HEK293T (cell line): ENCODE measurements at regions of chr6 and their contacts with region 1.

Region 1: DNA sequence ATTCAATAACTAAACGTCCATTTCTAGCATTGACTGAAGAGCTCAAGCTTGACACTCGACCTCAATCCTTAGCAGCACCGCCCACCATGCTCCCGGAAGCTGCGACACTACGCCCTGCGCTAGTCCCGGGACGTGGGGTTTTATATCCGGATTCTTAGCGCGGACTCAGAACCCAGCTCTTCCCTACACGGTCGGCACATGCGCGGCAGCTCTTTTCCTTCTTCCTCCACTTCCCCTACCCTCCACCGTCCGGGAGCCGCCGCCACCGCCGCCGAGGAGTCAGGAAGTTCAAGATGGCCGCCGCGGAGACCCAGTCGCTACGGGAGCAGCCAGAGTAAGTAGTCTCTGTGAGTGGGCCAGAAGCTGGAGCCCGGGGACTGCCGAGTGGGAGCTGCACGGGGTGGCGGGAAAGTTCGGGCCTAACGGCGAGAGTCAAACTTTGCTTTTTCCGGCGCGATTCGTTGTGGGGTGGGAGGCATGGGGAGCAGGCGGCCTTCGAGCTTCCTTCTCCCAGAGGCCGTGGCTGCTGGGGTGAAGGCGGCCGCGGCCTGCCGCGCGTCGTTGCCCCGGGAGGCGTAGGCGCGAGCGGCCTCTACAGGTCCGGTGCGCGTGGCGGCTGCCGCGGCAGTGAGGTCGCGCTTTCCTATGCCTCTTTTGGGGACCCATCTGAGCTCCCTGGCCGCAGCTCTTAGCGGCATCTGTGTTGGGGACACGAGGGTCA is 57.6 kb downstream of the FAM217A start:
- DNase-seq: peak; percentile 85

Region 2: GRCh38 chr6:3748208-3749066 is 272.9 kb before region 1 on chr6:
- CTCF ChIA-PET with region 1: no interaction called
- POLR2A ChIA-PET with region 1: interaction called, 14 read pairs
- DNase-seq: peak; percentile 68

Region 3: GRCh38 chr6:3794092-3794491 is 227.2 kb before region 1 on chr6:
- CTCF ChIA-PET with region 1: no interaction called
- POLR2A ChIA-PET with region 1: no interaction called
- DNase-seq: no peak

Region 4: GRCh38 chr6:3997177-3997770 is 24.0 kb before region 1 on chr6:
- CTCF ChIA-PET with region 1: no interaction called
- POLR2A ChIA-PET with region 1: interaction called, 10 read pairs
- DNase-seq: no peak

Region 5: GRCh38 chr6:4008324-4009047 is 12.8 kb before region 1 on chr6:
- CTCF ChIA-PET with region 1: interaction called, 6 read pairs
- POLR2A ChIA-PET with region 1: interaction called, 17 read pairs
- DNase-seq: peak; percentile 45

Region 6: GRCh38 chr6:4055420-4056041 is 34.2 kb after region 1 on chr6:
- CTCF ChIA-PET with region 1: no interaction called
- POLR2A ChIA-PET with region 1: interaction called, 10 read pairs
- DNase-seq: peak; percentile 22

Region 7: DNA sequence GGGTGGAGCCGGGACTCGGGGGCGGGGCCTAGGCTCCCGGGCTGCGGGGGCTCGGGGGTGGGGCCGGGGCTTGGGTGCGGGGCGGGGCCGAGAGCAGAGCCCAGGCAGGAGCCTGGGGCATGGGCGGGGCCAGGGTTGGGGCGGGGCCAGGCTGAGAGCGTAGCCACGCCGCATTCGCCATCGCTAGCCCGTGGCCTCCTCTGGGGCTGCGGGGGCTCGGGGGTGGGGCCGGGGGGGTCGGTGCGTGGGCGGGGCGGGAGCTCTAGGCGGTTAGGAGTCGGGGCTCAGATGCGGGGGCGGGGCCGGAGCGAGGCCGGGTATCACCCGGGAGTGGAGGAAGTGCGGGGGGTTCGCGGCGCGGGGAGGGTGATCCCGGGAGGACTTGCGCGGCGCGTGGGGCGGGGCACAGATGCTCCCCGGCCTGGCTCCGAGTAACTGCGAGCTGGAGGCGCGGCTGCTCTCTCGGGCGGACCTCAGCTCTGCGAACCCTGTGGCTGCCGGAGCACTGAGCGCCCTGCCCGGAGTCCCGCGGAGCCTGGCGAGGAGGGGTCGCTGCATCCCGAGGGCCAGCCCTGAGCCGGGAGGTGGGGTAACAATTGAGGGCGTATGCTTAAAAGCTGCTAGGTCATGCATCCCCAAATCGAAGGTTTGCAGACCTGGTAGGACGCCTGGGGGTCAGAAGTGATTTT is 114.5 kb after region 1 on chr6:
- CTCF ChIA-PET with region 1: no interaction called
- POLR2A ChIA-PET with region 1: interaction called, 24 read pairs
- DNase-seq: peak; percentile 100

Region 8: DNA sequence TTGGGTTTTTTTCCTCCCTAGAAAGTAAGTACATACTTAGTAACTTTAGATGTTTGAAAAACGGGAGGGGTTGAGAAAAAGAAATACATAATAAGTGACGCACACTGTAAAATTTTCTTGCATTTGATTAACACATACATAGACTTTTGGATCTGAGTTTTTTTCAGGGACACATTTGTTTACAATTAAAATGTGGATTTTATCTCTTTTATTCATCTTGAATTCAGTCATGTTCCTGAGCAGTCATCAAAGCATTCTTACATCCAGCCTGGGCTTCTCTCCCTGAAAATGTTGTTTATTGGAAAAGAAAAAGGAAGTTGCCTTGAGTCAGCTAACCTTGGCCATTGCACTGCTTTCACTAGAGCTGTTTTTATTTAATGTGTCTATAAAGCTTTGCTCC is 991.2 kb after region 1 on chr6:
- CTCF ChIA-PET with region 1: no interaction called
- POLR2A ChIA-PET with region 1: no interaction called
- DNase-seq: no peak